GM10248 (cell line): ENCODE measurements at regions of chr14 and their contacts with region 1.

Region 1: DNA sequence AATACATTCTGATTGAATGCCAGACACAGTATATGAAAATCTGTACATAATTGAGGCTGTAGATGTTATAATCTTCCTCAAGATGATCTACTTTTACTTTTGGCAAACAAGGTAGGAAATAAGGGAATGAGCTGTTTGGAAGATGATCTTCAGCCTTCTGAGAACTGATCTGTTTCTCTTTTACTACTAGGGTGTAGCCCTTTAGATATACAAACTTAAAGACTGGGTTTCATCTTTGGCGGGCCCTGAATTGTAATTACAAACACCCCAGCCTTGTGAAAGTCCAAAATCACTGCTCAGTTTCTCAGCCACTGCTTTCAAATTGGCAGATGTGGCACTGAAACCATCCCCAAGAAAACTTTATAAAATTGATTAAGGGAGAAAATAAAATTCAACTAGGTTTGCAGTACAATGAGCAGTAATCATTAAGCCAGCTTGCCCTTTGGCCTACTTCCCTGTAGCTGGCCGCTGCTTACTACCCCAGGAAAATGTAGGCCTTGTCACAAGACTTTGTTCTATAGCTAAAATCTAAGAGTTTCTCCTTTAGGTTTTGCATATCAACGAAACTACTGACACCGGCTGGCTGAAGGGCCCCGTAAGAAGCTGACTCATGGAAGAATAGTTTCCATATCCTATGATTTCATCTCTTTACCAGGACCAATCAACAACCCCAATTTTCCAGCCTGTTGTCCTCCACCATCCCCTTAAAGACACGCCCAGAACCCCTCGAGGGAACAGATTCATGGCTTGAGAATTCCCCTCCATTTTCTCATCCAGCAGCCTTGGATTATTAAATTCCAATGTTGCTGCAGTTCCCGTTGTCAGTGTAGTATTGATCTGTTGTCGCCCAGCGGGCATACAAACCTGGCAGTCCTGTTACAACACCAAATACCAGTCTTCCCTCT is 210.8 kb downstream of the PCNX1 start:
- DNase-seq: peak; percentile 35
- CTCF ChIP-seq: no peak

Region 2: DNA sequence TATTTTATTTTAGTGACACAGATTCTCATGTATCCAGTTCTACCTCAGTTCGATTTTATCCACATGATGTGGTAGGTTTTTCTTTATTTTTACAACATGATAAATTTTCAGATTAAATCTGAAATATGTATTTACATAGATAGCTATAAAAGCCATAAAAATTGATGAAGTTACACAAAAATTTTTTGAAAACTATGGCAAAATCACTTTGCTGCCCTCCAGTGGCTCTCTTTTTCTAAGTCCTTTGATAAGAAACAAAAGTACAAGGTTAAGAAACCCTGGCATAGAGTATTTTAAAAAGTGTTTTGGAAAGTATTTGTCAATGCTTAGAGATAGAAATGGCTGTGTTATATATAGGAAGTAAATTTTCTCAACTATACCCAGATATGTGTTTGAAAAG is 106.6 kb before region 1 on chr14:
- CTCF ChIA-PET with region 1: no interaction called
- POLR2A ChIA-PET with region 1: interaction called, 11 read pairs
- DNase-seq: no peak
- CTCF ChIP-seq: no peak

Region 3: DNA sequence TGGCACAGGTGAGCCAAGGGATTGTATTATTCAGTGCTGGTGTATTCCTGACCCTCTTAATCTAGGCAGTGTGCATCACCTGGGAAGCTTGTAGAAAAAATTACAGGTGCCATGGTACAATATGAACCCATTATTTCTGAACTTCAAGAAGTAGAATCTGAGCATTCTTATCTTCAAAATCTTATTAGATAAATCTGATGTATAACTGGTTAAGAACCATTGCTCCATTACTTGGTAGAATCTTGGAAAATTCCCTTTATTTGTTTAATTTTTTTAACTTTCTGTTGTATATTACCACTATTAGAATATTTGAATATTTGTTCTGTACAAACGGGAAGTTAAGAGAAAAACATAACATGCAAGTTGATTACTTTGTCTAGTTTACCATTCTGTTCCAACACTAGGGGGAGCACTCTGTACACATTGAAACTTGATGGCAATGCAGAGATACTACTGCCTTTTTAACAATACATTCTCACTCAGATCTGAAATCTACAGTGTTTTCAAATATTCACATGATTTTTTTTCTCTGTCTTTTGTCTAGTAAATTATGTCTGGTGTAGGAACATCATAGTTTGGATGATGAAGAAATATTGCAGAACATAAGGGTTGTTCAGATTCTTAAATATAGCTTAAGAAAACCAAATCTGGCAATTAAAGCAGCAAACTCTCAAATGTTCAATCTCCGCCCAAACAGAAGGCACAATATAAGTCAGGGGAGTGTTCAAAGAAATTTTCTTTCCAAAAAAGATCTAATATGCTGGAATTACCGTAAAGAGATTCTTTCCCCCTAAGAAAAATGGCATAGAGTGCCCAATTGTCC is 14.2 kb before region 1 on chr14:
- CTCF ChIA-PET with region 1: interaction called, 28 read pairs
- POLR2A ChIA-PET with region 1: no interaction called
- DNase-seq: peak; percentile 65
- CTCF ChIP-seq: peak; percentile 73